HCT116 (cell line): ENCODE measurements at regions of chr16 and their contacts with region 1.

Region 1: DNA sequence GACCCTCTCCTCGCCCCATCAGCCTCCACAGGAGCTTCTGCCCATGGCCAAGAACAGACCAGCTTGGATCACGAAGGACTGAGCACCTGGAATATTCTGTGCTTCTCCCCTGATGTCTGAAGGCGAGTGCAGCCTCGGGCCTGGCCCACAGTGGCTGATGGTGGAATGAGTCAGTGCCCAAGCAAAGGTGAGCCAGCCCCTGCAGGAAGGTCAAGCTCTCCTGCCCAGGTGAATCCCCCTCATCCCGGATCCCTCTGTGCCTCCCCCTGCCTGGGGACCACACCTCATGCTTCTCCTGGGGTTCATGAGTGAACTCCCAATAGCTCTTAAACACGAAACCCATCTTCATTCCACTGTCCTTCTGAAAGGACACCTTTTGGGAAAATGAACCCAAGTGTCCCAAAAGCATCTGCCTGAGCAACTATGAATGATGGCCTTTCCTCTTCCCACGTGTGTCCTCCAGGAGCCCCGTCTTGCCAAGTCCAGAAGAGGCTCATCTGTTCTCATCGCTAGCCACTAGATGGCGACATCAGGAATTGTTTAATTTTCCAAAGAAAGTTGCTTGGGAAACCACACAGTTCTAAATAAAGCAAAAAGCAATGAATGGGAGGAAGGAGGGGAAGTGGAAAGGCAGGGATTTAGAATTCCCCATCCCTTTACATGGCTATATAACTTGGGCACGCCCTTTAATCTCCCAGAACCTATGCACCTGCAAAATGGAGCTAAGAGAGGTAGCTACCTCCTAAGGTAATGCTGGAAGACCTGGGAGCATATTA is 9.2 kb upstream of the CDH5 start:
- DNase-seq: peak; percentile 72
- ATAC-seq: peak; percentile 87
- H3K4me3 ChIP-seq: no peak overlapping the region
- H3K27ac ChIP-seq: no peak overlapping the region
- H3K4me1 ChIP-seq: peaks cover 10 to 24% of the 10 kb centered on the region in 2 experiments
- H3K27me3 ChIP-seq: peaks cover 26% of the 10 kb centered on the region
- CTCF ChIP-seq: peak; percentile 54 to 92 (median 74); a peak in 5 of 6 replicates
- POLR2A ChIP-seq: no peak
- RAD21 ChIP-seq: peak; percentile 64

Region 2: GRCh38 chr16:66344533-66345145 is 12.7 kb before region 1 on chr16:
- CTCF ChIA-PET with region 1: interaction called, 72 read pairs
- POLR2A ChIA-PET with region 1: no interaction called
- RAD21 ChIA-PET with region 1: interaction called in 1 of 2 experiments, 3 read pairs
- intact Hi-C with region 1: no loop called
- DNase-seq: no peak
- ATAC-seq: peak; percentile 69
- H3K4me3 ChIP-seq: no peak overlapping the region
- H3K27ac ChIP-seq: no peak overlapping the region
- H3K4me1 ChIP-seq: peaks cover 3 to 11% of the 10 kb centered on the region in 2 experiments; a peak in 3 of 4 replicates
- H3K27me3 ChIP-seq: no peaks in the 10 kb centered on the region
- CTCF ChIP-seq: peak; percentile 54 to 81 (median 62); a peak in 5 of 6 replicates
- POLR2A ChIP-seq: no peak
- RAD21 ChIP-seq: peak; percentile 49

Region 3: GRCh38 chr16:66483689-66484481 is 126.5 kb after region 1 on chr16:
- CTCF ChIA-PET with region 1: no interaction called
- POLR2A ChIA-PET with region 1: no interaction called
- RAD21 ChIA-PET with region 1: interaction called in 1 of 2 experiments, 3 read pairs
- intact Hi-C with region 1: loop called (anchors 5 kb)
- DNase-seq: peak; percentile 59
- ATAC-seq: peak; percentile 91
- H3K4me3 ChIP-seq: no peak overlapping the region
- H3K27ac ChIP-seq: no peak overlapping the region
- H3K4me1 ChIP-seq: peaks cover under 1 to 15% of the 10 kb centered on the region in 2 experiments; a peak in 3 of 4 replicates
- H3K27me3 ChIP-seq: no peaks in the 10 kb centered on the region
- CTCF ChIP-seq: peak; percentile 96 to 98 (median 97)
- POLR2A ChIP-seq: no peak
- RAD21 ChIP-seq: peak; percentile 98